ENCODE measurements at regions of chr11 and their contacts with region 1.

Region 1: DNA sequence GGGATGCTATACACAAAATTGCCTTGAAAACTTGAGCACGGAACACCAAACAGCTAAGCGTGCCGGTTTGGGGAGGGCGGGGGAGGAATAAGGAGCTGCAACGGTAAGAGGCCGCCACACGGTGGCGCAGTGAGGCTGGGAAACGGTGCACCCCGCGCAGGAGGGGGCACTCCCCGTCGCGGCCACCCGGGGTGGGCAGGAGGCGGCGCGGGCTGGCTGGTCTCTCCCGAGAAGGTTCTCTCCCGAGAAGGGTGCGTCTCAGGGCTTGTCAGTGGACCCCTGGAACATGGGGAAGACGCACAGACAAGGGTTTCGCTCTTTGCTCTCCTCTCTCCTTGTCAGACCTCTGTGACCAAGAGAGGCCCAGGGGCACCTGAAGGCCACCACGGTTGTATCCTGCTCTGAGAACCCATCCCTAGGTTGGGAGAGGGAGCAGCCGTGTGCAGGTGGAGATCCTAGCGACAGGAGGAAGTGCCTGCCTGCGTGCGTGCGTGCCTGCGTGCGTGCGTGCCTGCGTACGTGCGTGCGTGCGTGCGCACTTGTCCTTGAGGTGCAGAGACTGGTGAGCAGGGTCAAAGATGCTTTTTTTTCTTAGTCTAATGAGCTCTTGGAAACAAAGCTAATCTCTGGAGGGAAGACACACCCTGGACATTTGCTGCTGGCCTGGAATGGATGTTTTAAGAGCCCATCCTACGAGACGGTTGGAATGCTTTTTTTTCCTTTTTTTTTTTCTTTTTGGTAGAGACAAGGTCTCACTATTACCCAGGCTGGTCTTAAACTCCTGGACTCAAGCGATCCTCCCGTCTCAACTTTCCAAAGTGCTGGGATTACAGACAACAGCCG is 18.1 kb upstream of the JAM3 start:
- DNase-seq: peak; percentile 69
- H3K4me3 ChIP-seq: peak overlapping the region; percentile 14 to 44 (median 27)
- H3K27ac ChIP-seq: peak overlapping the region; percentile 22
- H3K4me1 ChIP-seq: no peaks in the 10 kb centered on the region
- H3K27me3 ChIP-seq: peaks cover 2 to 6% of the 10 kb centered on the region in 2 experiments
- CTCF ChIP-seq: peak; percentile 86 to 95
- POLR2A ChIP-seq: no peak

Region 2: GRCh38 chr11:133927690-133928627 is 122.8 kb before region 1 on chr11:
- CTCF ChIA-PET with region 1: interaction called, 43 read pairs
- POLR2A ChIA-PET with region 1: no interaction called
- dilution Hi-C with region 1: no loop called
- intact Hi-C with region 1: loop called (anchors 1 kb)
- DNase-seq: peak; percentile 45
- H3K4me3 ChIP-seq: no peak overlapping the region
- H3K27ac ChIP-seq: no peak overlapping the region
- H3K4me1 ChIP-seq: no peaks in the 10 kb centered on the region
- H3K27me3 ChIP-seq: no peaks in the 10 kb centered on the region
- CTCF ChIP-seq: peak; percentile 70 to 89
- POLR2A ChIP-seq: no peak

Region 3: DNA sequence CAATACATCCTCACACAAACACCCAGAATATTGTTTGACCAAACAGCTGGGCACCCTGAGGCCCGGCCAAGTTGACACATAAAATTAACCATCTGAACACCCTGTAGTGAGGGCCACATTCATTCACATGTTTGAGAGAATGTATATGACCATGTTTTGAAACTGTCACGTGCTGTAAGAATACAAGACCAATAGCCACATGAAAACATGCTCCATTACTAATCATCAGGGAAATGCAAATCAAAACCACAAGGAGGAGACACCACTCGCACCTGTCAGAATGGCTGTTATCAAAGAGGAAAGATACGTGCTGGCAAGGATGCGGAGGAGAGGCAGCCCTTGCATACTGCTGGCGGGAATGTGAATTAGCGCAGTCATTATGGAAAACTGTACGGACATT is 55.7 kb before region 1 on chr11:
- CTCF ChIA-PET with region 1: no interaction called
- POLR2A ChIA-PET with region 1: no interaction called
- dilution Hi-C with region 1: no loop called
- intact Hi-C with region 1: no loop called
- DNase-seq: no peak
- H3K4me3 ChIP-seq: no peak overlapping the region
- H3K27ac ChIP-seq: no peak overlapping the region
- H3K4me1 ChIP-seq: no peaks in the 10 kb centered on the region
- H3K27me3 ChIP-seq: peaks cover 0 to 2% of the 10 kb centered on the region in 2 experiments
- CTCF ChIP-seq: no peak
- POLR2A ChIP-seq: no peak

Region 4: GRCh38 chr11:134062265-134063123 is 11.7 kb after region 1 on chr11:
- CTCF ChIA-PET with region 1: interaction called, 46 read pairs
- POLR2A ChIA-PET with region 1: no interaction called
- dilution Hi-C with region 1: no loop called
- intact Hi-C with region 1: no loop called
- DNase-seq: no peak
- H3K4me3 ChIP-seq: no peak overlapping the region
- H3K27ac ChIP-seq: no peak overlapping the region
- H3K4me1 ChIP-seq: peaks cover 26% of the 10 kb centered on the region
- H3K27me3 ChIP-seq: peaks cover 2 to 6% of the 10 kb centered on the region in 2 experiments
- CTCF ChIP-seq: no peak
- POLR2A ChIP-seq: no peak

Region 5: GRCh38 chr11:134098566-134099184 is 47.9 kb after region 1 on chr11:
- CTCF ChIA-PET with region 1: interaction called, 20 read pairs
- POLR2A ChIA-PET with region 1: no interaction called
- dilution Hi-C with region 1: no loop called
- intact Hi-C with region 1: loop called (anchors 1 kb)
- DNase-seq: no peak
- H3K4me3 ChIP-seq: no peak overlapping the region
- H3K27ac ChIP-seq: no peak overlapping the region
- H3K4me1 ChIP-seq: no peaks in the 10 kb centered on the region
- H3K27me3 ChIP-seq: no peaks in the 10 kb centered on the region
- CTCF ChIP-seq: peak in 1 of 2 donors; percentile 12
- POLR2A ChIP-seq: no peak

Region 6: DNA sequence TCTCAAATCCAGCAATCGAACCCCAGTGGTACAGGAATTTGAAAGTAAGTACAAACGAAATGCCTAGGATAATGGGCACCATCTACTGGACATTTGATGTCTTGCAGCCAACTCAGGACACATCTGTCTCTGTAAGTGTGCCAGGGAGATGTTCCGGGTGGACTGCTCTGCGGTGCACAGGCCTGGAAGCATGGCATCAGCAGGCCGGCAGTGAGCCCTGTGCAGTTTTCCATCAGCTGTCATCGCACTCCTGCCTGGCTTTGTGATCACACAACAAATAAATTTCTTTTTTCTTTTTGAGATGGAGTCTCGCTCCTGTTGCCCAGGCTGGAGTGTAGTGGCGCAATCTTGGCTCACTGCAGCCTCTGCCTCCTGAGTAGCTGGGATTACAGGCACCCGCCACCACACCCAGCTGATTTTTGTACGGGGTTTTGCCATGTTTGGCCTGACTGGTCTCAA is 89.1 kb after region 1 on chr11:
- CTCF ChIA-PET with region 1: interaction called, 80 read pairs
- POLR2A ChIA-PET with region 1: no interaction called
- dilution Hi-C with region 1: no loop called
- intact Hi-C with region 1: loop called (anchors 1 kb)
- DNase-seq: peak; percentile 87
- H3K4me3 ChIP-seq: no peak overlapping the region
- H3K27ac ChIP-seq: no peak overlapping the region
- H3K4me1 ChIP-seq: no peaks in the 10 kb centered on the region
- H3K27me3 ChIP-seq: no peaks in the 10 kb centered on the region
- CTCF ChIP-seq: peak; percentile 81 to 84
- POLR2A ChIP-seq: no peak